ENCODE measurements at regions of chr4 and their contacts with region 1.

Region 1: GRCh38 chr4:11589676-11590075 is 161.0 kb upstream of the HS3ST1 start:
- DNase-seq: no peak
- H3K4me3 ChIP-seq: no peak overlapping the region
- H3K4me3 Mint-ChIP-seq: no peak overlapping the region
- H3K27ac Mint-ChIP-seq: no peak overlapping the region
- H3K4me1 ChIP-seq: no peaks in the 10 kb centered on the region
- H3K4me1 Mint-ChIP-seq: no peaks in the 10 kb centered on the region
- H3K27me3 ChIP-seq: no peaks in the 10 kb centered on the region
- H3K27me3 Mint-ChIP-seq: no peaks in the 10 kb centered on the region
- CTCF ChIP-seq: no peak

Region 2: GRCh38 chr4:11228546-11228945 is 361.1 kb before region 1 on chr4:
- CTCF ChIA-PET with region 1: no interaction called
- POLR2A ChIA-PET with region 1: no interaction called
- intact Hi-C with region 1: no loop called
- DNase-seq: no peak
- H3K4me3 ChIP-seq: no peak overlapping the region
- H3K4me3 Mint-ChIP-seq: no peak overlapping the region
- H3K27ac Mint-ChIP-seq: no peak overlapping the region
- H3K4me1 ChIP-seq: no peaks in the 10 kb centered on the region
- H3K4me1 Mint-ChIP-seq: peaks cover 14% of the 10 kb centered on the region
- H3K27me3 ChIP-seq: no peaks in the 10 kb centered on the region
- H3K27me3 Mint-ChIP-seq: no peaks in the 10 kb centered on the region
- CTCF ChIP-seq: no peak

Region 3: GRCh38 chr4:11543706-11544105 is 46.0 kb before region 1 on chr4:
- CTCF ChIA-PET with region 1: no interaction called
- POLR2A ChIA-PET with region 1: no interaction called
- intact Hi-C with region 1: no loop called
- DNase-seq: no peak
- H3K4me3 ChIP-seq: no peak overlapping the region
- H3K4me3 Mint-ChIP-seq: no peak overlapping the region
- H3K27ac Mint-ChIP-seq: no peak overlapping the region
- H3K4me1 ChIP-seq: no peaks in the 10 kb centered on the region
- H3K4me1 Mint-ChIP-seq: no peaks in the 10 kb centered on the region
- H3K27me3 ChIP-seq: no peaks in the 10 kb centered on the region
- H3K27me3 Mint-ChIP-seq: no peaks in the 10 kb centered on the region
- CTCF ChIP-seq: no peak

Region 4: GRCh38 chr4:11710453-11711093 is 120.9 kb after region 1 on chr4:
- CTCF ChIA-PET with region 1: no interaction called
- POLR2A ChIA-PET with region 1: no interaction called
- intact Hi-C with region 1: loop called (anchors 10 kb)
- DNase-seq: no peak
- H3K4me3 ChIP-seq: no peak overlapping the region
- H3K4me3 Mint-ChIP-seq: no peak overlapping the region
- H3K27ac Mint-ChIP-seq: no peak overlapping the region
- H3K4me1 ChIP-seq: no peaks in the 10 kb centered on the region
- H3K4me1 Mint-ChIP-seq: no peaks in the 10 kb centered on the region
- H3K27me3 ChIP-seq: no peaks in the 10 kb centered on the region
- H3K27me3 Mint-ChIP-seq: peaks cover 8% of the 10 kb centered on the region
- CTCF ChIP-seq: no peak

Region 5: GRCh38 chr4:12118651-12119213 is 529.1 kb after region 1 on chr4:
- CTCF ChIA-PET with region 1: no interaction called
- POLR2A ChIA-PET with region 1: no interaction called
- intact Hi-C with region 1: no loop called
- DNase-seq: no peak
- H3K4me3 ChIP-seq: no peak overlapping the region
- H3K4me3 Mint-ChIP-seq: no peak overlapping the region
- H3K27ac Mint-ChIP-seq: no peak overlapping the region
- H3K4me1 ChIP-seq: no peaks in the 10 kb centered on the region
- H3K4me1 Mint-ChIP-seq: no peaks in the 10 kb centered on the region
- H3K27me3 ChIP-seq: no peaks in the 10 kb centered on the region
- H3K27me3 Mint-ChIP-seq: no peaks in the 10 kb centered on the region
- CTCF ChIP-seq: no peak

Measured in Caco-2 (cell line).